ENCODE measurements at regions of chr9 and their contacts with region 1.

Region 1: GRCh38 chr9:124776954-124777665 is at the start of gene OLFML2A:
- DNase-seq: peak in 3 of 5 donors; percentile 50 to 79 (median 71)
- H3K4me3 ChIP-seq: peak within 1 kb of the TSS in 2 of 3 donors; percentile 26 to 49
- H3K27ac ChIP-seq: no peak within 1 kb of the TSS
- H3K4me1 ChIP-seq: peaks cover 0 to 4% (median 0%) of the 10 kb centered on the region in 3 donors
- H3K27me3 ChIP-seq: peaks cover 5% of the 10 kb centered on the region
- CTCF ChIP-seq: no peak
- total RNA-seq, gene OLFML2A: 12.2 TPM

Region 2: GRCh38 chr9:124066783-124067563 is 710.1 kb before region 1 on chr9:
- intact Hi-C with region 1: no loop called
- DNase-seq: no peak
- H3K4me3 ChIP-seq: no peak overlapping the region
- H3K27ac ChIP-seq: no peak overlapping the region
- H3K4me1 ChIP-seq: no peaks in the 10 kb centered on the region
- H3K27me3 ChIP-seq: no peaks in the 10 kb centered on the region
- CTCF ChIP-seq: no peak

Region 3: GRCh38 chr9:124852829-124853531 is 75.9 kb after region 1 on chr9 and contains the start of gene WDR38:
- intact Hi-C with region 1: loop called (anchors 5 kb)
- DNase-seq: peak; percentile 75 to 91 (median 83)
- H3K4me3 ChIP-seq: peak within 1 kb of the TSS in 2 of 3 donors; percentile 33 to 43
- H3K27ac ChIP-seq: no peak within 1 kb of the TSS
- H3K4me1 ChIP-seq: peaks cover 0 to 10% (median 0%) of the 10 kb centered on the region in 3 donors
- H3K27me3 ChIP-seq: no peaks in the 10 kb centered on the region
- CTCF ChIP-seq: peak; percentile 94
- total RNA-seq, gene WDR38: 0.31 TPM

Region 4: GRCh38 chr9:124960409-124960752 is 183.3 kb after region 1 on chr9:
- intact Hi-C with region 1: no loop called
- DNase-seq: no peak
- H3K4me3 ChIP-seq: no peak overlapping the region
- H3K27ac ChIP-seq: no peak overlapping the region
- H3K4me1 ChIP-seq: no peaks in the 10 kb centered on the region
- H3K27me3 ChIP-seq: no peaks in the 10 kb centered on the region
- CTCF ChIP-seq: no peak

Region 5: DNA sequence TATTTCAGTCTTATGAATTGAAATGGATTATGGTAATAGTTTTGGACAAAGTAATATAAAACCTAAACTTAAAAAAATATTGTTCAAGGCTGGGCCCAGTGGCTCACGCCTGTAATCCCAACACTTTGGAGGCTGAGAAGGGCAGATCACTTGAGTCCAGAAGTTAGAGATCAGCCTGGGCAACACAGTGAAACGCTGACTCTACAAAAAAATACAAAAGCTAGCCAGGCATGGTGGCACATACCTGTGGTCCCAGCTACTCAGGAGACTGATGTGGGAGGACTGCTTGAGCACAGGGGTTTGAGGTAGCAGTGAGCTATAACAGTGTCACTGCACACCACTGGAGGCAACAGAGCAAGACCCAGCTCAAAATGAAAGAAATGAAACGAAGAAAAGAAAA is 284.3 kb after region 1 on chr9:
- intact Hi-C with region 1: no loop called
- DNase-seq: no peak
- H3K4me3 ChIP-seq: no peak overlapping the region
- H3K27ac ChIP-seq: no peak overlapping the region
- H3K4me1 ChIP-seq: no peaks in the 10 kb centered on the region
- H3K27me3 ChIP-seq: no peaks in the 10 kb centered on the region
- CTCF ChIP-seq: no peak